Breast epithelium (tissue), 4 donors: ENCODE measurements at regions of chr15 and their contacts with region 1.

Region 1: DNA sequence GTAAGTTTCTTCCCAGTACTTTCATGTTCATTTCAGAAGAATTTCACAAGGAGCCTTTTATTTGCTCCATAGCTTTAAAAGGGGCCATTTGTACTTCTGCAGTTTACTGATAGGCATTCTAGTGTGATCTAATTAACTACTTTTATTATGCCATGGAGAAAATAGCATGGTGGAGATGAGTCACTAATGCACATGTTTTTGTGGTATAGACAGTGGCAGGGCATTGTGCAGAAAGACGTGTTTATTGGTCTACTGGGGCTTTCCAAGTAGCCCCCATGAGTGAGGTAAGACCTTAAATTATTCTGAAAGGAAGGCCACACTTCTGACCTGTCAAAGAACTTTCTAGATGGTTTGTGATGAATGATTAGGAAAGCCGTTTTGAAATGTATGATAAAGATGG is 810.0 kb upstream of the NR2F2 start:
- DNase-seq: no peak
- H3K4me3 ChIP-seq: no peak overlapping the region
- H3K27ac ChIP-seq: no peak overlapping the region
- H3K4me1 ChIP-seq: no peaks in the 10 kb centered on the region
- H3K27me3 ChIP-seq: no peaks in the 10 kb centered on the region
- CTCF ChIP-seq: no peak
- POLR2A ChIP-seq: no peak

Region 2: DNA sequence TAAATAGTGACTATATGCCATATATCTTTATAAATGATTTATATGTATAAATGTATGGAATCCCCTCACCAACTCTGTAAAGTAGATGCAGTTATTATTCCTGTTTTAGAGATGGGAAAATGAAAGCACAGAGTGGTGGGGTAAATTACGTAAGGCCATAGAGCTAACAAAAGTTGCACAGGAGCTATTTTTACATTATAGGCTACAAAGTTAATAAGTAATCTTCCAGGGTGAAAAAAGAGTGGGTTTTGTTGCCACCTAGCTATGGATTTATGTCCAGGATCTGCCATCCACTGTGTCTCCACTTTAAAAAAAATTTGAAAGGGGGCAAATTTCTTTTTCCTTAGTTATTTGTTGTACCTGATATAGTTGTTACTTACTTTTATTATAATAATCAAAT is 1053.5 kb before region 1 on chr15:
- intact Hi-C with region 1: no loop called
- DNase-seq: no peak
- H3K4me3 ChIP-seq: no peak overlapping the region
- H3K27ac ChIP-seq: no peak overlapping the region
- H3K4me1 ChIP-seq: no peaks in the 10 kb centered on the region
- H3K27me3 ChIP-seq: no peaks in the 10 kb centered on the region
- CTCF ChIP-seq: no peak
- POLR2A ChIP-seq: no peak

Region 3: GRCh38 chr15:95715906-95716656 is 195.6 kb after region 1 on chr15:
- intact Hi-C with region 1: no loop called
- DNase-seq: no peak
- H3K4me3 ChIP-seq: no peak overlapping the region
- H3K27ac ChIP-seq: no peak overlapping the region
- H3K4me1 ChIP-seq: no peaks in the 10 kb centered on the region
- H3K27me3 ChIP-seq: no peaks in the 10 kb centered on the region
- CTCF ChIP-seq: no peak
- POLR2A ChIP-seq: no peak

Region 4: DNA sequence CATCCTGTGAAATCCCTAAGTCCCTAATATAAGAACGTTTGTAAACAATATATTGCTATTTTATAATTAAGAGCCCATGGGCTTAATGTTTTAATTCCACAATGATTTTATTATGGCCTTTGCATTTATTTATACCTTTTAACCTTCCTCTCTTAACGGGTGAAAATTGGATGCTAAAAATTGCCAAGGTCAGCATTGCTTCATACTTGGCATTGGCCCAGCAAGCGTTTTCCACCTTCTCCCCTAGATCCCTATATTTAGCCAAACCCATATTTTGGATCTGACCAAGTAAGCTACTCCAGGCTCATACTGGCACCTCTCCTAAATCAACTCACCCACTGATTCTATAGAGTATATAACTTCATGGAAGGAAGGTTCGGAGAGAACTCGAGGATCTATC is 622.0 kb after region 1 on chr15:
- intact Hi-C with region 1: loop called (anchors 5 kb)
- DNase-seq: no peak
- H3K4me3 ChIP-seq: no peak overlapping the region
- H3K27ac ChIP-seq: no peak overlapping the region
- H3K4me1 ChIP-seq: no peaks in the 10 kb centered on the region
- H3K27me3 ChIP-seq: no peaks in the 10 kb centered on the region
- CTCF ChIP-seq: no peak
- POLR2A ChIP-seq: no peak